Left cardiac atrium (tissue), 4 donors: ENCODE measurements at regions of chr1 and their contacts with region 1.

Region 1: GRCh38 chr1:236480758-236481436 is 42.9 kb upstream of the LGALS8 start:
- DNase-seq: no peak
- ATAC-seq: no peak

Region 2: GRCh38 chr1:236119943-236120484 is 360.9 kb before region 1 on chr1:
- intact Hi-C with region 1: loop called in 1 of 2 experiments (anchors 5 kb)
- DNase-seq: no peak
- ATAC-seq: no peak

Region 3: DNA sequence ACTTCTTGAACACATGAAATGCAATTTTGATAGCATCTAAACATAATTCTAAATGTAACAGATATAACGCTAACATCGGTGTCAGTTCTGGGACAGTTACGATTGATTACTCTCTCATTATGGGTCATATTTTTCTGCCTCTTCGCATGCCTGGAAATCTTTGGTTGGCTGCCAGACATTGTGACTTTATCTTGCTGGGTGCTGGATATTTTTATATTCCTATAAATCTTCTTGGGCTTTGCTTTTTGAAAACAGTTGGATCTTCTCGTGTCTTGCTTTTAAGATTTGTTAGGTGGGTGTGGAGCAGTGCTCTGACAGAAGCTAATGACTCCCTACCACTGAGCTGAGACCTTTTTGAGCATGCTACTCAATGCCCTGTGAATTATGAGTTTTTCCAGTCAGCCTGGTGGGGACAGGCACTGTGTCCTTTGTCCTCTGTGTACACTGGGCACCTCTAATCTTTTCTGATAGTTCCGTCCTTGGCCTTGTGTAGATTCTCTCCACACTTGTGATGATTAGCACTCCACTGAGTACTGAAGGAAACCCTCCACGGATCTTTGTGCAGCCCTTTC is 114.8 kb before region 1 on chr1:
- intact Hi-C with region 1: no loop called
- DNase-seq: no peak
- ATAC-seq: no peak